ENCODE measurements at regions of chr6 and their contacts with region 1.

Region 1: DNA sequence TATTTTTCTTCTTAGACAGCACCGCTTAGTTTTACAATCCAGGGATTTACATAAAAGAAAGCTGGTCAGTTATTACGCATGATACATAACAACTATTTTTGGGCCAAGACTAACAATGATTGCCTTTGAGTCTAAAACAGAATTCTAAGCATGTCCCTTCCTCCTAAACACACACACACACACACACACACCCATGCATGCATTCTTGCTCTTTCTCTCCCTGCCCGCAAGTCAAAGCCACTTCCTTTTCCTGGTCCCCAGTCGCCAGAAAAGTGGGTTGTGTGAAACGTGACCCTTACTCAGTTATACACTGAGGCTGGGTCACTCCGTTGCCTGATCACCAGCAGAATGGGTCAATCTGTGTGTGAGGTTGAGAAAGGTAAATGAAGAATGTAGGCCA is 31.4 kb downstream of the FYN start:
- DNase-seq: peak; percentile 67
- ATAC-seq: no peak
- H3K4me3 Mint-ChIP-seq: no peak overlapping the region
- H3K27ac Mint-ChIP-seq: no peak overlapping the region
- H3K4me1 Mint-ChIP-seq: peaks cover 63% of the 10 kb centered on the region
- H3K27me3 Mint-ChIP-seq: no peaks in the 10 kb centered on the region

Region 2: GRCh38 chr6:111823831-111824607 is 17.8 kb before region 1 on chr6:
- CTCF ChIA-PET with region 1: interaction called, 12 read pairs
- POLR2A ChIA-PET with region 1: interaction called, 23 read pairs
- intact Hi-C with region 1: loop called (anchors 1 kb)
- DNase-seq: peak; percentile 49
- ATAC-seq: peak; percentile 64
- H3K4me3 Mint-ChIP-seq: peak overlapping the region; percentile 63
- H3K27ac Mint-ChIP-seq: peak overlapping the region; percentile 97
- H3K4me1 Mint-ChIP-seq: peaks cover 89% of the 10 kb centered on the region
- H3K27me3 Mint-ChIP-seq: no peaks in the 10 kb centered on the region

Region 3: DNA sequence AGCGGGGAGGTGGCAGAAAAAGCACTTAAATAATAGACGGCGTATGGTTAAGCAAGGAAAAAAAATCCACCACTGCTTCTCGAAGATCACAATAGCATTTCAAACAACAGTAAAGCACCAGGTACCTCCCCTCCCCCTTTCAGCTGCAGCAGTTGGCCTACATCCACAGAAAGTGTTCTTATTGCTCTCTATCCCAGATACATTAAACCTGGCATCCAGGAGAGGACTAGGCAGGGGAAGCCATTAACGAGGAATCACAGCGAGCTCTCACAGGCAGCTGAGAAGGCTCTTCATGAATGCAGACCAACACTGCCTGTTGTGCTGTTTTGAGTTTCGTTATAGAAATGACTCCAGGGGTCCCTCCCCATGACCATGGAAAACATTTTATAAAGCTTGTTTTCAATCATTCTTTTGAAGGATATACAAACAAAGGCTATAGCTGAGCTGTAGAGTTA is 19.6 kb after region 1 on chr6:
- CTCF ChIA-PET with region 1: interaction called, 8 read pairs
- POLR2A ChIA-PET with region 1: interaction called, 13 read pairs
- intact Hi-C with region 1: loop called (anchors 1 kb)
- DNase-seq: peak; percentile 48
- ATAC-seq: peak; percentile 40
- H3K4me3 Mint-ChIP-seq: peak overlapping the region; percentile 20
- H3K27ac Mint-ChIP-seq: peak overlapping the region; percentile 91
- H3K4me1 Mint-ChIP-seq: peaks cover 100% of the 10 kb centered on the region
- H3K27me3 Mint-ChIP-seq: no peaks in the 10 kb centered on the region

Region 4: DNA sequence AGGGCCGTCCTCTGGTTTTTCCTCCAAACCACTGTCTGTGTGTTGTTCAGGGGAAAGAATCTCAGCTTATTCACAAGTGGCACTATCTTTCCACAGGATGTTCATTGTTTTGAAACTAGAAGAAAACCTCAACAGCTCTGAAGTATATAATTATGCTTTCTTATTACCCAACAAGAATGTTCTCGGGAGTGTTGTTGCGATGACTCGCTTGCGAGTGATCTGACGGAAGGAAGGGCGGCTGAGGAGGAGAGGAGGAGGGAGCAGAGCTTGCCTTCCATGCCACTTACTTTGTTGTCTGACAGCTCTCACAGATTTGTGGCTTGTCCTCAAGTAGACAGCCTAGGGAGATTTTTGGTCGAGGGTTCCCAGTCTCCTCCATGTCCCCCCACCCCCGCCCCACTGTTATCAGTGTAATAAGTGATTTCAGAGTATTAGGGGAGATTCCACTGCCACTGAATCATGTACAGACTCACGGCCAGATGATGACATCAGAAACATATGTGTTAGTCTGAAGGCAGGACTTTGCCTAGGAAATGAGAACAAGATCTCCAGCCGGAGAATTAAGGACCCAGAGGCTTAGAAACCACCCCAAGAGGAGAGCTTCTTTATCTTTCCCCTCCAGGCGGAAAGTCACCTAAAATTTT is 131.4 kb after region 1 on chr6:
- CTCF ChIA-PET with region 1: interaction called, 5 read pairs
- POLR2A ChIA-PET with region 1: no interaction called
- intact Hi-C with region 1: loop called in 1 of 2 experiments (anchors 2 kb)
- DNase-seq: peak; percentile 80
- ATAC-seq: peak; percentile 84
- H3K4me3 Mint-ChIP-seq: peak overlapping the region; percentile 65
- H3K27ac Mint-ChIP-seq: peak overlapping the region; percentile 90
- H3K4me1 Mint-ChIP-seq: peaks cover 73% of the 10 kb centered on the region
- H3K27me3 Mint-ChIP-seq: no peaks in the 10 kb centered on the region

Region 5: GRCh38 chr6:112018619-112019416 is 177.0 kb after region 1 on chr6:
- CTCF ChIA-PET with region 1: interaction called, 3 read pairs
- POLR2A ChIA-PET with region 1: interaction called, 5 read pairs
- intact Hi-C with region 1: loop called in 1 of 2 experiments (anchors 1 kb)
- DNase-seq: no peak
- ATAC-seq: no peak
- H3K4me3 Mint-ChIP-seq: no peak overlapping the region
- H3K27ac Mint-ChIP-seq: peak overlapping the region; percentile 43
- H3K4me1 Mint-ChIP-seq: peaks cover 78% of the 10 kb centered on the region
- H3K27me3 Mint-ChIP-seq: no peaks in the 10 kb centered on the region

Measured in activated CD4-positive, alpha-beta T cell treated with anti-CD3 and anti-CD28 coated beads for 36 hours (primary cell).